Mammary epithelial cell (primary cell): ENCODE measurements at regions of chr1 and their contacts with region 1.

Region 1: DNA sequence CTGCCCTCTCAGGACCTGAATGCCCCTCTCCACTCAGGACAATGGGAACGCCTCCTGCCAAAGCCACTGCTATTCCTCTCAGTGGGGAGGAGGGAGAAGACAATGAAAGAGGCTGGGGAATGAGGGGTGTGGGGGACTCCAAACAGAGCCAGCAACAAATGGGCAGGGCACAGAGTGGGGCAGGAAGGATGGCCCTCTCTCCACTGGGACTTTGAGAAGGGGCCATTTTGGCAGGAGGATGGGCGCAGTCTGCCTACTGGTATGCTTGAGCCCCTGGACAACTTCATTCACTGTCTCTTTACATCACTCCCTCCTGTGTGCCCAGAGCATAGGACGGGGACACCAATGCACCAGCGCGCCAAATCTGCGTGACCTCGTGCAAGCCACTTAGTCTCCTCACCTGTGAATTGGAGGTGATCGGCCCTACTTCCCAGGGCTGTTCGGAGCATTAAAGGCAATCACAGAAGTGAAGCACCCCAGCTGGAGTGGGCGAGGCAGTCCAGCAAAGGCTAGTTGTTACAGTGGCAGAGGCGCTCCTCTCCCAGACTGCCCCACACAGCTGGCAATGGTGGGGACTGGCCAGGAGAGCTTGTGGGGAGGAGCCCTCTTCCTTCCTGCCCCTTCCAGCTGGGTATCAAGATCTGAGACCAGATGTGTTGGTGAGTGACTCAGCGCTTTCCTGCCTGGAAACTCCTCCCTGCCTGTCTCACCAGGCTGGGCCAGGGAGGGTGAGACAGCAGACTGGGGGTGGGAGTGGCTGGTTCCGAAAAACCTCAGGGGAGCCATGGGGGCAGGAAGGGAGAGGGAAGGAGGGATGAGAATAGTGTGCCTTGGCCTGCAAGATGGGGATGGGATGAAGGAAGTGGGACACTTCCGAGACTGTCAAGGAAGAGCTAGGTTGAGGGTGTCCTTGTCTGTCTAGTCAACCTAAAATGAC is 22.4 kb upstream of the SYNC start:
- DNase-seq: peak; percentile 93
- H3K4me3 ChIP-seq: no peak overlapping the region
- H3K27ac ChIP-seq: peak overlapping the region; percentile 37
- H3K4me1 ChIP-seq: peaks cover 15% of the 10 kb centered on the region
- H3K27me3 ChIP-seq: no peaks in the 10 kb centered on the region
- CTCF ChIP-seq: no peak

Region 2: DNA sequence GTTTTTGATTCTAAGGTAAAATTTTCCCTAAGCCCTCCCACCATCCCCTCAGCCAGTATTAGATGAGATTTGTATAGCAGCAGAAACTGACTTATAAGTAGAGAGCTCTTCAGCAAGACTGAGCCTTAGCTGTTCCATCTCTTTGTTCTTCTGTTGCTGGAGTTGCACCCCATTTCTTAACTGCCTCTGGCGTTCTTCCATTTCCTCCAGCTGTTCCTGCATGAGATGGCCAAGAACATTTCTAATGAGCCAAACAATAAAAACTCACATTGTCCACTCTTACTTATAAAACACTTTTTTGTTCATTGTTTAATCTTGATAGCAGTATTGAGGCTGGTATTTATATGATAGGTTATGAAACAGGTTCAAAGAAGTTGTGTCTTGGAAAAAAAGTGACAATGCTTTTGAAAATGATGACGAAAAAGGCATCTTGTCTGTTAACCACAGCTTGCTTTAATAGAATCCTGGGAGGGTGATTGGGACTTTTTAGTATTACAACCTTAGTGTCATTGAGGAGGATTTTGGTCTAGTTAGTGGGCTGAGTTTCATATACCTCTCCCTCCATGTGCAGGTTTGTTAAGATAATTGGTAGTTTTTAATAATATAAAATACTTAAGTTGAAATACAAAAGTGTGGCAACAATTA is 40.7 kb before region 1 on chr1:
- CTCF ChIA-PET with region 1: no interaction called
- dilution Hi-C with region 1: no loop called
- in situ Hi-C with region 1: no loop called
- intact Hi-C with region 1: no loop called
- DNase-seq: peak; percentile 6
- H3K4me3 ChIP-seq: no peak overlapping the region
- H3K27ac ChIP-seq: no peak overlapping the region
- H3K4me1 ChIP-seq: no peaks in the 10 kb centered on the region
- H3K27me3 ChIP-seq: no peaks in the 10 kb centered on the region
- CTCF ChIP-seq: no peak

Region 3: GRCh38 chr1:32741413-32742198 is 16.7 kb after region 1 on chr1:
- CTCF ChIA-PET with region 1: no interaction called
- dilution Hi-C with region 1: no loop called
- in situ Hi-C with region 1: no loop called
- intact Hi-C with region 1: loop called (anchors 2 kb)
- DNase-seq: no peak
- H3K4me3 ChIP-seq: peak overlapping the region; percentile 88 to 92 (median 91)
- H3K27ac ChIP-seq: peak overlapping the region; percentile 62
- H3K4me1 ChIP-seq: peaks cover 22% of the 10 kb centered on the region
- H3K27me3 ChIP-seq: no peaks in the 10 kb centered on the region
- CTCF ChIP-seq: peak in 1 of 2 donors; percentile 51

Region 4: GRCh38 chr1:33111970-33112369 is 387.0 kb after region 1 on chr1:
- CTCF ChIA-PET with region 1: no interaction called
- dilution Hi-C with region 1: no loop called
- in situ Hi-C with region 1: no loop called
- intact Hi-C with region 1: no loop called
- DNase-seq: peak; percentile 26
- H3K4me3 ChIP-seq: no peak overlapping the region
- H3K27ac ChIP-seq: no peak overlapping the region
- H3K4me1 ChIP-seq: no peaks in the 10 kb centered on the region
- H3K27me3 ChIP-seq: no peaks in the 10 kb centered on the region
- CTCF ChIP-seq: peak; percentile 48 to 62

Region 5: GRCh38 chr1:33228935-33229487 is 504.1 kb after region 1 on chr1:
- CTCF ChIA-PET with region 1: no interaction called
- dilution Hi-C with region 1: no loop called
- in situ Hi-C with region 1: no loop called
- intact Hi-C with region 1: no loop called
- DNase-seq: peak; percentile 66
- H3K4me3 ChIP-seq: no peak overlapping the region
- H3K27ac ChIP-seq: no peak overlapping the region
- H3K4me1 ChIP-seq: peaks cover 5% of the 10 kb centered on the region
- H3K27me3 ChIP-seq: no peaks in the 10 kb centered on the region
- CTCF ChIP-seq: no peak